ENCODE measurements at regions of chr2 and their contacts with region 1.

Region 1: DNA sequence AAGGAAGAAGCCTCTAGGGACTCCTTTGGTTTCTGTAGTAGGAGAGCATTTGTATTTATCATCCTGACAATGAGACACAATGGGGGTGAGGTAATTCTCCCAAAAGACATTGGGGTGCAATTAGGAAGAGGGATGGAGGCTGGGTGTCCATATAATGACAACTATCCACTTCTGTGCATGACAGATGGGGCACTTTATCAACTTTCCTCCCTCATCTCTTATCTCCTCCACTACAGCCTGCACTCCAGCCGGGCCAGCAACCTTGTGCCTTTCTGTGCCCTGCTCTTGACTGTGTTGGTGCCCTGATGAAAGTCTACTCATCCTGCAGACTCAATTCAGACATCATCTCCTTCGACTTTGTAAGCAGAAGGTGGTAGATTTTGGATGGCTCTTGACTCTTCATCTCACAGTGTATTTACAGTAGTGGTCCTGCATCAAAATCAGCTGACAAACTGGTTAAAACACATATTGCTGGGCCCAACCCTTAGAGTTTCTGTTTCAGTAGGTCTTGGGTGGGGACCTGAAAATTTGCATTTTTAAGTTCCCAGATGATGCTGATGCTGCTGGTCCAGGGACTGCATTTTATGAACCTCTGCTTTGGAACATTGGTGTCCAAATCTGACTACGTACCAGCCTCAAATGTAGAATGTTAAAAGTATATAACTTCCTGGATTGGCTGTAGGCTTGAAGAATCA is 40.8 kb upstream of the CFAP36 start:
- DNase-seq: no peak
- H3K4me3 ChIP-seq: no peak overlapping the region
- H3K27ac ChIP-seq: no peak overlapping the region
- H3K4me1 ChIP-seq: no peaks in the 10 kb centered on the region
- H3K27me3 ChIP-seq: no peaks in the 10 kb centered on the region
- CTCF ChIP-seq: no peak
- POLR2A ChIP-seq: no peak

Region 2: DNA sequence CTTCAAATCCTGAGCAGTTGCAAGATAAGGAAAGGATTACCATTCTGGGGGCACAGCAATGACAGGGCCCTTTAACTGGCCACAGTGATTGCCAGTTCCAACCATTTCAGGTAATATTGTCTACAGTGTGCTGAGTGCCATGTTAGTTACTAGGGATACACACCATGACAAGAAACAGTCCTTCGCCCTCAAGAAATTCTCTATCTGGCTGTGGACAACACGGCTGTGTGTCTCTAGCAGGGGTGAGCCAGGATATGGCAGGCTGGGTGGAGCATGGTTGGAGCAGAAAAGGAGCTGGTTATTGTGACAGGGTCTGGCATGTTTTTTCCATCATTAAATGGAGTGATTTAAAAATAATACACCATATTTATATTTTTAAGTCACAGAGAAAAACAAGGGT is 1253.8 kb before region 1 on chr2:
- intact Hi-C with region 1: loop called (anchors 5 kb)
- DNase-seq: no peak
- H3K4me3 ChIP-seq: no peak overlapping the region
- H3K27ac ChIP-seq: no peak overlapping the region
- H3K4me1 ChIP-seq: no peaks in the 10 kb centered on the region
- H3K27me3 ChIP-seq: no peaks in the 10 kb centered on the region
- CTCF ChIP-seq: no peak
- POLR2A ChIP-seq: no peak

Region 3: GRCh38 chr2:55862673-55863390 is 384.1 kb after region 1 on chr2:
- intact Hi-C with region 1: no loop called
- DNase-seq: peak in 1 of 2 donors; percentile 36
- H3K4me3 ChIP-seq: no peak overlapping the region
- H3K27ac ChIP-seq: peak overlapping the region; percentile 58 to 78
- H3K4me1 ChIP-seq: no peaks in the 10 kb centered on the region
- H3K27me3 ChIP-seq: no peaks in the 10 kb centered on the region
- CTCF ChIP-seq: no peak
- POLR2A ChIP-seq: no peak